ENCODE measurements at regions of chr5 and their contacts with region 1.

Region 1: GRCh38 chr5:38809388-38810359 is 36.1 kb upstream of the OSMR start:
- DNase-seq: peak; percentile 80 to 82
- H3K4me3 ChIP-seq: peak overlapping the region in 1 of 3 donors; percentile 19
- H3K27ac ChIP-seq: peak overlapping the region; percentile 25 to 75
- H3K4me1 ChIP-seq: peaks cover 0 to 9% of the 10 kb centered on the region in 2 donors
- H3K27me3 ChIP-seq: no peaks in the 10 kb centered on the region
- CTCF ChIP-seq: peak; percentile 73 to 93 (median 89)
- POLR2A ChIP-seq: no peak

Region 2: DNA sequence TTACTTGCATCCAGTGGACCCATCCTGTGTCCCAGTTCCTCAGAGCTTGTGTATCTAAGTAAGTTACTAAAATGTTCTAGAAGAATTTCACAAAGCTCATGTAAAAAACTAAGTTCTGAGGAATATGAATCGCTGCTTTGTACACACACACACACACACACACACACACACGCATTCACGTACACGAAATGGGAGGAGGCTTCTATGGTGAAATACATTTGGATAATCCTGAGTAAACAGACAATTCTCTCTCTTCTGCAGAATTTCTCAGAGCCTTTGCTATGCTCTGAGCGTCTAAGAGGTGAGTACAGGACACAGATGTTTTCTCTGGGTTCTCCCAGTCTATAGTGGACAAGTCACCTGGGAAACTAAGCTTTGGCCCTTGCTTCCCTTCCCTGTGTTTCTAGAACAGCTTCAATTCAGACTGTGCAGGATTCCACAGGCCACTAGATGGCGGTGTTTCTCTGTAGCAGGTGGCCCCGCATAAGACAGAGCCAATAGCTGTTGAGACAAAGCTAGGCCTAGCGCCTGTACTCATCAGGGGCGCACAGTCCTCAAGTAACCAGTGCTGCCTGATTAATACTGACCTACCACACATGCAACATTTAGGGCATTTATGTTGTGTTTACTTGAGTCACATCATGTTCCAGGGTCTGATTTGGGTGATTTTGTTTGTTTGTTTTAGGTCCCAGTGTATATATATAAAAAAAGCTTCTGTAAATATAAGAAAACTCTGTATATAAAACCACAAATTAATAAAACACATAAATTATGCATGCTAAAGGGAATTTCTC is 368.0 kb before region 1 on chr5:
- intact Hi-C with region 1: loop called (anchors 10 kb)
- DNase-seq: peak; percentile 80 to 86
- H3K4me3 ChIP-seq: no peak overlapping the region
- H3K27ac ChIP-seq: no peak overlapping the region
- H3K4me1 ChIP-seq: no peaks in the 10 kb centered on the region
- H3K27me3 ChIP-seq: no peaks in the 10 kb centered on the region
- CTCF ChIP-seq: peak; percentile 91 to 97 (median 93)
- POLR2A ChIP-seq: no peak

Region 3: GRCh38 chr5:38751103-38751502 is 58.6 kb before region 1 on chr5:
- intact Hi-C with region 1: no loop called
- DNase-seq: no peak
- H3K4me3 ChIP-seq: no peak overlapping the region
- H3K27ac ChIP-seq: no peak overlapping the region
- H3K4me1 ChIP-seq: no peaks in the 10 kb centered on the region
- H3K27me3 ChIP-seq: no peaks in the 10 kb centered on the region
- CTCF ChIP-seq: no peak
- POLR2A ChIP-seq: no peak